ENCODE measurements at regions of chr19 and their contacts with region 1.

Region 1: GRCh38 chr19:18456974-18457373 is 19.0 kb upstream of the ISYNA1 start:
- DNase-seq: peak in 1 of 2 donors; percentile 87
- H3K4me3 ChIP-seq: no peak overlapping the region
- H3K27ac ChIP-seq: peak overlapping the region; percentile 81 to 85
- H3K4me1 ChIP-seq: peaks cover 12 to 38% of the 10 kb centered on the region in 2 donors
- H3K27me3 ChIP-seq: no peaks in the 10 kb centered on the region
- CTCF ChIP-seq: no peak

Region 2: GRCh38 chr19:18401580-18402112 is 55.3 kb before region 1 on chr19:
- intact Hi-C with region 1: no loop called
- DNase-seq: peak in 1 of 2 donors; percentile 80
- H3K4me3 ChIP-seq: no peak overlapping the region
- H3K27ac ChIP-seq: no peak overlapping the region
- H3K4me1 ChIP-seq: no peaks in the 10 kb centered on the region
- H3K27me3 ChIP-seq: peaks cover 4% of the 10 kb centered on the region
- CTCF ChIP-seq: no peak

Region 3: GRCh38 chr19:18846862-18847548 is 390.0 kb after region 1 on chr19:
- intact Hi-C with region 1: loop called (anchors 5 kb)
- DNase-seq: peak in 1 of 2 donors; percentile 86
- H3K4me3 ChIP-seq: no peak overlapping the region
- H3K27ac ChIP-seq: peak overlapping the region; percentile 81 to 90
- H3K4me1 ChIP-seq: peaks cover 23 to 47% of the 10 kb centered on the region in 2 donors
- H3K27me3 ChIP-seq: no peaks in the 10 kb centered on the region
- CTCF ChIP-seq: peak; percentile 77 to 86 (median 77)